ENCODE measurements at regions of chr22 and their contacts with region 1.

Region 1: DNA sequence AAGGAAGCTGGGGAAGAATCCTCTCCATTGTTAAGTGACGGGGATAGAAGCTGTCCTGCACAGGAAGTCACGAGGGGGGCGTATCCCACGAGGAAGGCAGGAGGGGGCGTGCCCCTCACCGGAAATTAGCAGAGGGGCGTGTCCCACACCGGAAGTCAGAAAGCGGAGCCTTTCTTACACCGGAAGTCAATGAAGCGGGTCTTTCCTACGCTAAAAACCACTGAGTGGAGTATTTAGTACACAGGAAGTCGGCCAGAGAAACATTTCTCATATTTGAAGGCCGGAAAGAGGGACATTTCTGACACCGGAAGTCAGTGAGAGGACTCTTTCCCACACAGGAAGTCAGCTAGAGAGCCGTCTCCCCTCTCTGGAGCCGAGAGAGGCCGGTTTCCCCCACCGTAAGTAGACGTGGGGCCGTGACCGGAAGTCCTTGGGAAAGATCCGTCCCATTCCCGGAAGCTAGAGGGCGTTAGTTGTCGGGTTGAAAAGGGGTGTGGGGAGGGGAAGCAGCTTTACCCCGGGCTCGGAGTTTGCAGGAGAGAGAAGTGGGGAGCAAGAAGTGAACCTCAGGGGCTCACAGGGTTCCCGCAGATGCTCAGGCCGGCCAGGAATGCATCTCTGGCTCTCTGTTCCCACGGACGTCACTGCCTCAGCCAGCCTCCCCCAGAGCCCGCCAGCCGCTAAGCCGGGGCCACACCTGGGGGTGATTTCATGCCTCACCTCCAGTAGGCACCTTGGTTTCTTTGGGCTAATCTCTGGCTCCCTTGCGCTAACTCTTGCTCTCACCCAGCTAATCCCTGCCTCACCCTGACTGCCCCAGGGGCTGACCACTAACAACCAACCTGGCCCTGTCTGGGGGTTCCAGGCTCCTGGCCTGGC is 15.4 kb downstream of the MIAT start:
- DNase-seq: peak; percentile 77 to 98 (median 94)
- ATAC-seq: peak; percentile 66
- H3K4me3 ChIP-seq: peak overlapping the region; percentile 79 to 81
- H3K4me3 Mint-ChIP-seq: peak overlapping the region; percentile 98
- H3K27ac ChIP-seq: peak overlapping the region; percentile 83 to 98
- H3K27ac Mint-ChIP-seq: peak overlapping the region; percentile 100
- H3K4me1 ChIP-seq: peaks cover 78% of the 10 kb centered on the region
- H3K4me1 Mint-ChIP-seq: peaks cover 79% of the 10 kb centered on the region
- H3K27me3 ChIP-seq: no peaks in the 10 kb centered on the region
- H3K27me3 Mint-ChIP-seq: no peaks in the 10 kb centered on the region
- CTCF ChIP-seq: no peak

Region 2: DNA sequence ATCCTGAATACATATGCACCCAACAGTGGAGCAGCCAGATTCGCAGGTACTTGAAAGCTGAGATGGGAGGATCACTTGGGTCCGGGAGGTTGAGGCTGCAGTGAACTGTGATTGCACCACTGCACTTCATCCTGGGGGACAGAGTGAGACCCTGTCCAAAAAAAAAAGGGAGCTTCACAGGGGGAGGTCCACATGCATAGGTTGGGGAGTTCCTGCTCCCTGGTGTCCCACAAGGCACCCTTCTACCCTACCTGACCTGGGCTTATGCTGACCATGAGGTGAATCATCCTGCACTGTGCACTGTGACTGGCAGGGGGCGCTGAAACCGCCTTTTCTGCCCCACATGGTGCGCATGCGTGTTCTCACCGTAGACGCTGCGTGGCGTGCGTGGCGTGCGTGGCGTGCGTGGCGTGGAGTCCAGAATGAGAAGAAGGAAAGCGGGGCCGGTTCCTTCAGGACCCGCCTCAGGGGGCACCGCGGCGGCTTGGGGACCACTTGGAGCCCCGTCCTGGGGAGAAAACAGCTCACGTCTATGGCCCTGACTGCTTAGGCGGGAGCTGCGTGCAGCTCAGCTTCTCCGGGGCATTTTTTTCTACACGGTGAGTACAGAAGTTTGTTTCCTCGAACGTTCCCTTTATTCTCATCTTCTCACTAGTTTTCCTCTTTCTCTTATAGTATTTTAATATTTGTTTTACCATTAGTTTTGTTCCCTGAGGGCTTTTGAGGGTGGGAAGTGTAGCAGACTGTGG is 1225.0 kb before region 1 on chr22:
- CTCF ChIA-PET with region 1: no interaction called
- POLR2A ChIA-PET with region 1: no interaction called
- intact Hi-C with region 1: loop called in 1 of 2 experiments (anchors 10 kb)
- DNase-seq: peak; percentile 75 to 93 (median 91)
- ATAC-seq: peak; percentile 97
- H3K4me3 ChIP-seq: peak overlapping the region; percentile 68 to 80
- H3K4me3 Mint-ChIP-seq: peak overlapping the region; percentile 93
- H3K27ac ChIP-seq: peak overlapping the region; percentile 70 to 71
- H3K27ac Mint-ChIP-seq: peak overlapping the region; percentile 92
- H3K4me1 ChIP-seq: peaks cover 35% of the 10 kb centered on the region
- H3K4me1 Mint-ChIP-seq: peaks cover 41% of the 10 kb centered on the region
- H3K27me3 ChIP-seq: no peaks in the 10 kb centered on the region
- H3K27me3 Mint-ChIP-seq: no peaks in the 10 kb centered on the region
- CTCF ChIP-seq: peak; percentile 91

Region 3: DNA sequence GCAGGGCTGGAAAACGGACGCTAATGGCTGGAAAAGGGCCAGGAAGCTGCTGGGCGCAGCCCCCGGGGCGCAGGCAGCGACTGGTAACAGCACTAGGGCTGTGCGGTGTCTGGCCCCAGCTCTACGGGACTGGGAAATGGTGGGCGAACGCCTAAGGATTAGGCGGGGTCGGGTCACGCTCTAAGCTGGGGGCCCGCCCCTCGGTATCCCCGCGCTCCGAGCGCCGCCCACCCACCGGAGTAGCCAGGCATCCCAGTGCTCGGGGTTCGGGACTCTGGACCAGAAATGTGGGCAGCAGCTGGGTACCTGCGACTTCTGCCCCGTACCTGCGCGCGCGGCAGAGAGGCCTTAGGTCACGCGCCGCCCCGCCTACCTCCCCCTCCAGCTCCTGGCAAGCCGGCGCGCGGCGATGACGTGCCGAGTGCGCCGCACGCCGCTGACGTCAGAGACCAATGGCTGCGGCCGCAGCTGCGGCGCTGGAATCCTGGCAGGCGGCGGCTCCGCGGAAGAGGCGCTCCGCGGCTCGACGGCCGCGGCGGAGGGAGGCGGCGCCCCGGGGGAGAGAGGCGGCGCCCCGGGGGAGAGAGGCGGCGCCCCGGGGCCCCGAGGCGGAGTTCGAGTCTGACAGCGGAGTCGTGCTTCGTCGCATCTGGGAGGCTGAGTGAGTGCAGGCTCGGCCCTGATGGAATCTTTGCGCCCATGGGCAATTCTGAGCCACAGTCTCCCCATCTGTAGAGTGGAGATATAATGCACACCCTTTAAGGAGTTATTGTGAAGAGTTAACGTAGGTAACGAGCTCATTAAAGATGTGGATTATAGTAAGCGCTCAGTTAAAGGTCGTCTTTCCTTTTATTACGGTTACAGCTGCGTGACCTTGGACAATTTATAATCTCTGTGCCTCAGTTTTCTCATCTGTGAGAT is 189.1 kb before region 1 on chr22 and contains the starts of genes HPS4 and SRRD:
- CTCF ChIA-PET with region 1: interaction called, 3 read pairs
- POLR2A ChIA-PET with region 1: interaction called, 33 read pairs
- intact Hi-C with region 1: loop called (anchors 1 kb)
- DNase-seq: peak; percentile 87 to 97 (median 93)
- ATAC-seq: peak; percentile 83
- H3K4me3 ChIP-seq: peak within 1 kb of the TSS; percentile 78 to 97
- H3K4me3 Mint-ChIP-seq: peak within 1 kb of the TSS; percentile 95
- H3K27ac ChIP-seq: peak within 1 kb of the TSS; percentile 85 to 94
- H3K27ac Mint-ChIP-seq: peak within 1 kb of the TSS; percentile 99
- H3K4me1 ChIP-seq: peaks cover 53% of the 10 kb centered on the region
- H3K4me1 Mint-ChIP-seq: peaks cover 69% of the 10 kb centered on the region
- H3K27me3 ChIP-seq: no peaks in the 10 kb centered on the region
- H3K27me3 Mint-ChIP-seq: no peaks in the 10 kb centered on the region
- CTCF ChIP-seq: no peak
- total RNA-seq, gene HPS4: 67.0 to 71.0 TPM
- total RNA-seq, gene SRRD: 22.1 to 24.1 TPM

Region 4: DNA sequence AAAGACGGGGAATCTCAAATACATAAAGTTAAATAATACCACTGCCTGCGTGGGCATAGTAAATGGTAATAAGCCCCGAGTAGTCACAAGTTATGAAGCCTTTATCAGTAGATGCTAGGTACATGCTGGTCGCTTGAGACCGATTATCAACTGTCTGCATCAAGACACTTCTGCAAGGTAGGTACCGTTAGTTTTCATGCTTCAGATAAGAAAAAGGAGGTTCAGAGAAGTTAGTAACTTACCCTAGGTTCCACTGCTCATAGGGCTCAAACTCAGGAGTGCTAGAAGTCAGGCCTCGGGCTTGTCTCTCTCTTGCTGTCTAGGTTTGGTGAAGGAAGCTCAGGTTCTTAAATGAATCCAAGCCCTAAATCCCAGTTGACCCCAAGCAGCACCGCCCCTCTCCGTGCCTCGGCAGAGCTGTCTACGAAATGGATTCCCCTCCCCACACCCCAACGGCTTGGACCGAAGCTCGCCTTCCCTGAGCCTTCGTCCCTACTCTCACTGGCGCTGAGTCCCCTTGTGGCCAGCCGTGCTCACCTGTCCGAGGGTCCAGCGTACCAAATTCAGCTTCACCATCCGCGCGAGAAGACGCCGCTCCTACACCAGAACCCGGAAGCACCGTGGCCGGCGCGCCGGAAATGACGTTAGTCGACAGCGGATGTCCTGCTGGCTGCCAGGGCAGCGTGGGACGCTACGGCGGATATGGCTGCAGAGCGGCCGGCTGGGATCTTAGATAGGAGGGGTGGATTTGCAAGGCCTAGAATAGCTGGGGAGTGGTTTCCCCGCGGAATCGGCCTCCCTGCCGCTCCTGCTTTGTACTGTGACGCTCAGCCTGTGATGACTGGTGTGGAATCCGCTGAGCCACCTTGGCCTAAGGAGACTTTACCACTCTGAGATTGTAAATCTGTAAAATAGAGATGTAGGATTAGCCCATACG is 160.7 kb before region 1 on chr22 and contains the start of gene TFIP11:
- CTCF ChIA-PET with region 1: no interaction called
- POLR2A ChIA-PET with region 1: interaction called, 4 read pairs
- intact Hi-C with region 1: loop called (anchors 1 kb)
- DNase-seq: peak; percentile 76 to 94 (median 92)
- ATAC-seq: peak; percentile 86
- H3K4me3 ChIP-seq: peak within 1 kb of the TSS; percentile 78 to 90
- H3K4me3 Mint-ChIP-seq: peak within 1 kb of the TSS; percentile 96
- H3K27ac ChIP-seq: peak within 1 kb of the TSS; percentile 81 to 85
- H3K27ac Mint-ChIP-seq: peak within 1 kb of the TSS; percentile 99
- H3K4me1 ChIP-seq: peaks cover 25% of the 10 kb centered on the region
- H3K4me1 Mint-ChIP-seq: peaks cover 44% of the 10 kb centered on the region
- H3K27me3 ChIP-seq: no peaks in the 10 kb centered on the region
- H3K27me3 Mint-ChIP-seq: no peaks in the 10 kb centered on the region
- CTCF ChIP-seq: no peak
- total RNA-seq, gene TFIP11: 138 to 142 TPM

Region 5: DNA sequence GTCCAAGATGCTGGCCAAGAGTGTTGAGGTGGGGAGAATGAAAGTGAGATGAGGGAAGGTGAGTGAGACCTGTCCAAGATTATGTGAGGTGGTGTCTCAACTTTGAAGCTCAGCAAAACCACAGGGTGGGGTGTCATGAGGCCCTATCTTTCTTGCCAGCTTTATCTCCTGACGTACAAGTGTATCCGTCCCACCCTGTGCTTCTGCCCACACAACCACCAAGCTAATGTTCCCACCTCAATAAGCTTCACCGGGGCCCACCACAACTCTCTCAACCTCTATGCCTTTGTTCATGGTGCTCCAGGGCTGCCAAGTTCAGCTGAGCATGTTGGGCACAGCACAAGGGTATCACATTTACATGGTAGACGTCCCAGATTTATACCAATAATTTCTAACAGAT is 75.8 kb before region 1 on chr22:
- CTCF ChIA-PET with region 1: interaction called, 4 read pairs
- POLR2A ChIA-PET with region 1: interaction called, 4 read pairs
- intact Hi-C with region 1: loop called in 1 of 2 experiments (anchors 1 kb)
- DNase-seq: peak in 6 of 9 experiments; percentile 38 to 91 (median 73)
- ATAC-seq: peak; percentile 83
- H3K4me3 ChIP-seq: peak overlapping the region in 1 of 2 experiments; percentile 13
- H3K4me3 Mint-ChIP-seq: peak overlapping the region; percentile 49
- H3K27ac ChIP-seq: peak overlapping the region; percentile 49 to 58
- H3K27ac Mint-ChIP-seq: peak overlapping the region; percentile 86
- H3K4me1 ChIP-seq: peaks cover 73% of the 10 kb centered on the region
- H3K4me1 Mint-ChIP-seq: peaks cover 67% of the 10 kb centered on the region
- H3K27me3 ChIP-seq: no peaks in the 10 kb centered on the region
- H3K27me3 Mint-ChIP-seq: no peaks in the 10 kb centered on the region
- CTCF ChIP-seq: no peak

Region 6: DNA sequence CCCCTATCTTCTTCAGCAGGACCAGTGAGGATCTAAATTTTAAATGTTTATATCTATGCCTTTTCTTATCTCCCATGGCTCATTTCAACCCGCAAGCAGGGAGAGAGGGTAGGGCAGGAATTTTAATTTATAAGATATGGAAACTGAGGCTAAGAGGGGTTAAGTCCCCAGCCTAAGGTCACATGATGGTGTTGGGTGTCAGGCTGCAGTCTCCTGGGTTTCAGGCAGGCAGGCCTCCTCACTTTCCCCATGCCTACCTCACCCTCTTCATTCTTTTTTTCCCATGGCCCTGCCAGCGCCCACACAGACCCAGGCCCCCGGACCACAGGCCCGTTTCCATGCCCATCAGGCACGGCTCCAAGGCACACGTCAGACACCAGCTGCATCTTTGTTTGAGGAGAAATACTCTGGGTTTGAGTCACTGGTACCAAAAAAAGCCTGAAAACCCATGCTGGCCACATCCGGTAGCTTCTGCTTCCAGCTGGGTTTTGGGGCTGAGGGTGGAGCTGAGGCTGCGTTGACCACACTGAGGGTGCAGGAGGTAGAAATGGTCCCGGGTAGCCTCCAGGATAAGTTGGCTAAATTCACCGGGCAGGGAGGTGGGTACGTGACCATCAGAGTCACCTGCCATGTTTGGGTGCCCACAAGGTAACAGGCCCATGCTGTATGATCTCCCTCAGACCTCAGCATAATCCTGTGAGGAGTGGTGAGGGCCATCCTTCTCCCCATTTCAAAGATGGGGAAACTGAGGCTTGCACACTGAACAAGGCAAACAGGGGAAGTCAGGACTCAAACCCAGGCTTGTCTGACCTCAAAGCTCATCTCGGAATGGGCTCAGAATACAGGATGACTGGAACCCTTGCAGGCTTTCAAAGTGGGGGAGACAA is 62.5 kb before region 1 on chr22:
- CTCF ChIA-PET with region 1: no interaction called
- POLR2A ChIA-PET with region 1: no interaction called
- intact Hi-C with region 1: no loop called
- DNase-seq: peak in 7 of 9 experiments; percentile 16 to 75 (median 43)
- ATAC-seq: peak; percentile 79
- H3K4me3 ChIP-seq: peak overlapping the region in 1 of 2 experiments; percentile 7
- H3K4me3 Mint-ChIP-seq: peak overlapping the region; percentile 37
- H3K27ac ChIP-seq: peak overlapping the region in 1 of 2 experiments; percentile 53
- H3K27ac Mint-ChIP-seq: peak overlapping the region; percentile 81
- H3K4me1 ChIP-seq: peaks cover 22% of the 10 kb centered on the region
- H3K4me1 Mint-ChIP-seq: peaks cover 22% of the 10 kb centered on the region
- H3K27me3 ChIP-seq: no peaks in the 10 kb centered on the region
- H3K27me3 Mint-ChIP-seq: no peaks in the 10 kb centered on the region
- CTCF ChIP-seq: no peak

Region 7: DNA sequence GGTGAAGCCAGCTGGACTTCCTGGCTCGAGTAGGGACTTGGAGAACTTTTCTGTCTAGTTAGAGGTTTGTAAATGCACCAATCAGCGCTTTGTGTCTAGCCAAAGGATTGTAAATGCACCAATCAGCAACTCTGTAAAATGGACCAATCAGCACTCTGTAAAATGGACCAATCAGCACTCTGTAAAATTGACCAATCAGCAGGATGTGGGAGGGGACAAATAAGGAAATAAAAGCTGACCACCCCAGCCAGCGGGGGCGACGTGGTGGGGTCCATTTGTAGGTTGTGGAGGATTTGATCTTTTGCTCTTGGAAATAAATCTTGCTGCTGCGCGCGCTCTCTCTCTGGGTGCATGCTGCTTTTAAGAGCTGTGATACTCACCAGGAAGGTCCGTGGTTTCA is 187.5 kb after region 1 on chr22:
- CTCF ChIA-PET with region 1: no interaction called
- POLR2A ChIA-PET with region 1: no interaction called
- intact Hi-C with region 1: no loop called
- DNase-seq: no peak
- ATAC-seq: no peak
- H3K4me3 ChIP-seq: no peak overlapping the region
- H3K4me3 Mint-ChIP-seq: no peak overlapping the region
- H3K27ac ChIP-seq: no peak overlapping the region
- H3K27ac Mint-ChIP-seq: no peak overlapping the region
- H3K4me1 ChIP-seq: no peaks in the 10 kb centered on the region
- H3K4me1 Mint-ChIP-seq: no peaks in the 10 kb centered on the region
- H3K27me3 ChIP-seq: no peaks in the 10 kb centered on the region
- H3K27me3 Mint-ChIP-seq: no peaks in the 10 kb centered on the region
- CTCF ChIP-seq: no peak

Region 8: GRCh38 chr22:27804470-27805297 is 1131.9 kb after region 1 on chr22:
- CTCF ChIA-PET with region 1: interaction called, 3 read pairs
- POLR2A ChIA-PET with region 1: no interaction called
- intact Hi-C with region 1: loop called (anchors 2 kb)
- DNase-seq: peak; percentile 6 to 67 (median 49)
- ATAC-seq: no peak
- H3K4me3 ChIP-seq: no peak overlapping the region
- H3K4me3 Mint-ChIP-seq: no peak overlapping the region
- H3K27ac ChIP-seq: no peak overlapping the region
- H3K27ac Mint-ChIP-seq: no peak overlapping the region
- H3K4me1 ChIP-seq: peaks cover 12% of the 10 kb centered on the region
- H3K4me1 Mint-ChIP-seq: peaks cover 14% of the 10 kb centered on the region
- H3K27me3 ChIP-seq: peaks cover 9 to 12% of the 10 kb centered on the region in 2 experiments
- H3K27me3 Mint-ChIP-seq: peaks cover 18% of the 10 kb centered on the region
- CTCF ChIP-seq: peak; percentile 60